ENCODE measurements at regions of chr3 and their contacts with region 1.

Region 1: DNA sequence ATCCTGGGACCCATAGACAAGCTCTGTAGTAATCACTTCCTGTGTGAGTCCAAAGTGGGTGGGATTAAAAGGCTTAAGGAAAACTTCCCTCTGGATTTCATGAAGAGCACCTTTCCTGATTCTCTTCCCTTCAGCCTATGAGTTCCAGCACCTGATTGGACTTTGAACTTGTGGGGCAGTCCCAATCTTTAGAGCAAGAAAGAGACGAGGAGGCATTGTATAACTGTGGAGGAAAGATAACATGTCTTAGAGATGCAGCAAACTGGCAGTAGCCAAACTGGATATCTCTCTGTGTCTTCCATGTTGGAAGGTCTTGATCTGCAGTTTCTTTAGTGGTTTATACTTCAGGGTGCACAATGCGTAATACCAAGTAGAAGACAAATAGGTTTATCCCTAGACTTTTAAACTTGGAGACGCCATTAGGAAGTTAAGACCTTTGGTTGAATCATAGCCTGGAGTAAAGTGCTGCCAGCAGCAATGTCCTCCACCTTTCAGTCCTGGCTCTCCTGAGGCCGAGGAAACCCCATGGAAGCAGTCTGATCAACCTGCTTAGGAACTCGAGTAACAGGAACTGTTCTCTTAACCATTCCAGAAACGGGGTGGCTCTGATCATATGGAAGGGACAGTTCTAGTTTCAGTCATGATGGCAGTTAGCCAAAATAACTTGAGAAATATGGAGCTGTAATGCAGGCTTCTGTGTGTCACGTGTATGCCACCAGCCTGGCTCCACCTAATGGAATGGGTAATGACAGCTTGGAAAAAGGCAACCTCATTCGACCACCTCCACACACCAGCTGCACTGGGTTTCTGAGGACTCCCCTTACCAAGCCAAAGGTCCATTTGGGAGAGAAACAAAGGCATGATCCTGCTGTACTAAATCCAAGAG is 4.7 kb downstream of the EIF1B start:
- DNase-seq: no peak
- H3K4me3 ChIP-seq: no peak overlapping the region
- H3K27ac ChIP-seq: peak overlapping the region in 2 of 4 donors; percentile 31 to 42
- H3K4me1 ChIP-seq: peaks cover 0 to 41% (median 17%) of the 10 kb centered on the region in 3 donors
- H3K27me3 ChIP-seq: no peaks in the 10 kb centered on the region
- CTCF ChIP-seq: no peak
- POLR2A ChIP-seq: no peak

Region 2: GRCh38 chr3:40191850-40192448 is 122.3 kb before region 1 on chr3:
- intact Hi-C with region 1: loop called (anchors 2 kb)
- DNase-seq: no peak
- H3K4me3 ChIP-seq: no peak overlapping the region
- H3K27ac ChIP-seq: no peak overlapping the region
- H3K4me1 ChIP-seq: peaks cover 0 to 16% (median 0%) of the 10 kb centered on the region in 3 donors
- H3K27me3 ChIP-seq: no peaks in the 10 kb centered on the region
- CTCF ChIP-seq: peak; percentile 72 to 94 (median 81)
- POLR2A ChIP-seq: no peak

Region 3: DNA sequence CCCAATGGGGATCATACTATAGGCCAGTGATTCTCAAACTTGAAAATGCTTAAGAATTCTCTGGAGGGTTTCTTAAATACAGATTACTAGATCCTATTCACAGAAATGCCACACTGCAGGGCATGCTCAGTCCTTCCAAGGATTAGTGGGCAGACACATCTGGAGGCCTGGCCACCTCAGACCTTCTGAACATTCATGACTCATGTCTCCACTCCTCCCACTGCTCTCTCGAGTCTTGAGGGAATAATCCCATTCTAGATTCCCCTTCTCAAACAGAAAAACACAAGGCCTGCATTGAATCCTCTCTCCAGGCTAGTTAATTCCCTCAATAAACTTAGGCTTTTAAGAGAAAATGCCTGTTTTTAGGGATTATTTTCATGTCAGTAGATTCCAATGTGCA is 232.6 kb after region 1 on chr3:
- intact Hi-C with region 1: no loop called
- DNase-seq: no peak
- H3K4me3 ChIP-seq: no peak overlapping the region
- H3K27ac ChIP-seq: no peak overlapping the region
- H3K4me1 ChIP-seq: no peaks in the 10 kb centered on the region
- H3K27me3 ChIP-seq: no peaks in the 10 kb centered on the region
- CTCF ChIP-seq: no peak
- POLR2A ChIP-seq: no peak

Measured in esophagus squamous epithelium (tissue), 5 donors.